RWPE1 (cell line): ENCODE measurements at regions of chr1 and their contacts with region 1.

Region 1: DNA sequence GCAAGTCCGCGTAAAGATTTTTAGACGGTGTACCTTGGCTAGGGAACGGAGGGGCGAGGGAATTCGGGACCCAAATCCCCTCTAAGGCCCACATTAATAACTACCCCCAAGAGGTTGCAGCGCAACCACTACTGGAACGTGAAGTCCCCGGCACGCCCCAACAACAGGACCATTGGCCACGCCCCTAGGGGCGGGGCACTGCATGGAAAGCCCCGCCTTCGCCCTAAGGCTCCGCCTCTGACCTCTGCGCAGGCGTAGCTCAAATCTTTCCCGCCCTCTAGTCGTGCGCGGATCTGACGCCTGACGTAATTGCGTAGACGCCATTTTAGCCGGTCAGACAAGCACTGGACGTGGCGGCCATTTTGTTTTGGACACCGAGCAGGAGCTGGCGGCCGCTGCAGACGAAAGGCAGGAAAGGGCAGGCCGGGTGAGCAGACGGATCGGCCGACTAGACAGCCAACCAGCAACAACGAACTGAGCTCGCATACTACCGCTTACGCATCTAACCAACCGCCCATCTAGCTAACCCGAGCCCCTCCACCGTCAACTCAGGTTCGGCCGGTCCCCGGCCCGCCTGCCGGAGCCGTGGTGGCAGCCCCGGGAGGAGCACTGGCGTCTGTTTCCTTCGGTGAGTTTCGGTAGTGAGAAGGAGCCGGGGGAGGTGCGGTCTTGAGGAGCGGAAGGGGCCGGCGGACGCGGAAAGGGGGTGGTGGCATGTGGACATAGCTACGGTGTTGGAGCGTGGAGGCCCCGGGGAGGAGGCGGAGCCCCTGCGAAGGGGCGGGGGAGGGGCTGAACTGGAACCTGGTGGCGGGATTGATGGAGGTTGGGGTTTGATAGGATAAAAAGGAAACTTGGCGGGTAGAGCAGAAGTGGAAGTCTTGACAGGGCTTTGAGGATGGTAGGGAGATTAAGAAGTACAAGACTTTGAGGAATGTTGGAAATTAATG is at the start of gene CHTOP:
- DNase-seq: peak; percentile 94
- H3K27ac ChIP-seq: peak within 1 kb of the TSS; percentile 100
- CTCF ChIP-seq: no peak

Region 2: GRCh38 chr1:153277817-153278216 is 356.2 kb before region 1 on chr1:
- CTCF ChIA-PET with region 1: no interaction called
- POLR2A ChIA-PET with region 1: no interaction called
- DNase-seq: no peak
- H3K27ac ChIP-seq: no peak overlapping the region
- CTCF ChIP-seq: peak; percentile 52

Region 3: GRCh38 chr1:153592748-153593147 is 41.2 kb before region 1 on chr1:
- CTCF ChIA-PET with region 1: no interaction called
- POLR2A ChIA-PET with region 1: no interaction called
- DNase-seq: no peak
- H3K27ac ChIP-seq: no peak overlapping the region
- CTCF ChIP-seq: no peak

Region 4: DNA sequence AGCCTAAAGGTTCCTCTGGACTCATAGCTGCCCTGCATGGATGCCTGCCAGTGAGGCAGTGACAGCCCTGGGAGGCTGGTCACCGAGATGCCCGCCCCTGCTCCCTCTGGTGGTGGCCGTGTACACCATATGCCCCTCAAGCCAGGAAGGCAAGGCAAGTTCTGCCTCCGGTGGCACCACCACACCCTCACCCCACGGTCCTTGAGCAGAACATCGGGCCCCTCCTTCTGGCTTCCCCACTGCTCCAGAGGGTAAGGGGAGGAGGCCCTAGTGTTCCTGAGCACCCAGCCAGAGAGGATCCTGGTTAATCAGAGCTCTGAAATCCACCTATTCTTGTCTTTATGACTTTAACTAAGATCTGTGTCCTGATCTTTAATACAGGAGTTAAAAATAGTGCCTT is 16.3 kb before region 1 on chr1:
- CTCF ChIA-PET with region 1: interaction called, 5 read pairs
- POLR2A ChIA-PET with region 1: interaction called, 56 read pairs
- DNase-seq: no peak
- H3K27ac ChIP-seq: peak overlapping the region; percentile 99
- CTCF ChIP-seq: no peak; the same call in 1 of the 2 replicates